ENCODE measurements at regions of chr12 and their contacts with region 1.

Region 1: DNA sequence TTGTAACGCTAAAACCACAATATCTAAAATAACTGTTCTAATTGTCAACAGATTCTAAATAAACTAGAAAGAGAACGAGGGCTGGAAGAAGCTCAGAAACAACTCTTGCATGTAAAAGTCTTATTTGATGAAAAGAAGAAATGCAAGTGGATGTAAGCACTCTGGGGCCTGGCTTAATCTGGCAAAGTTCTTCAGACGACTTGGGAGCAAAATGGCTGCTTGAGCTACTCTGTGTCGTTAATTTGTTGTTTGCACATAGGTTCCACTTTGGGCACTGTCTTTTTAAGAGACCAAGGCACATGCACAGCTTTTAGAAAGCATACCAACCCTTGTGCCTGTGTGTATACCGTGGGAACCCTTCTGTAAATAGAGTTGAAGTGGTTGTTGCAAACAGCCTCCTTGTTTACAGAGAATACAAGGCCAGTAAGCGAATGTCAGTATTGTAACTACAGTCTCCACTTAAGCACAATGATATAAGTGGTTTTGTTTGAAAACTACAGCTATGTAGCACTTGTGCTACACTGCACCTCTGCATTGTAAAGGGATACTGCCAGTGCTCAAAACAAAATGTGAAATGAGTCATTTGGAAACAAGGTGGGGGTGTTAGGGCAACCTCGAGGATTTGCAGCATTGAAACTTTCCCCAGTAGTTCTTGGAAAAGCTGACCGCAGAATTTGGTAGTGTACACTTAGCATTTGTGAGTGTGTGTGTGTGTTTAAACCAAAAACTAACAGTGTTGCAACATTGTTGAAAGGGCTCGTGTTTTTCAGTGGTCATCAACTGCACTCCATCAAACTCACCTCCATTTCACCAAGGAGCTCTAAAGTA is 154.3 kb downstream of the CEP83 start:
- DNase-seq: peak; percentile 70
- H3K4me3 Mint-ChIP-seq: no peak overlapping the region
- H3K27ac Mint-ChIP-seq: peak overlapping the region; percentile 61
- H3K4me1 Mint-ChIP-seq: peaks cover 39% of the 10 kb centered on the region
- H3K27me3 Mint-ChIP-seq: no peaks in the 10 kb centered on the region

Region 2: DNA sequence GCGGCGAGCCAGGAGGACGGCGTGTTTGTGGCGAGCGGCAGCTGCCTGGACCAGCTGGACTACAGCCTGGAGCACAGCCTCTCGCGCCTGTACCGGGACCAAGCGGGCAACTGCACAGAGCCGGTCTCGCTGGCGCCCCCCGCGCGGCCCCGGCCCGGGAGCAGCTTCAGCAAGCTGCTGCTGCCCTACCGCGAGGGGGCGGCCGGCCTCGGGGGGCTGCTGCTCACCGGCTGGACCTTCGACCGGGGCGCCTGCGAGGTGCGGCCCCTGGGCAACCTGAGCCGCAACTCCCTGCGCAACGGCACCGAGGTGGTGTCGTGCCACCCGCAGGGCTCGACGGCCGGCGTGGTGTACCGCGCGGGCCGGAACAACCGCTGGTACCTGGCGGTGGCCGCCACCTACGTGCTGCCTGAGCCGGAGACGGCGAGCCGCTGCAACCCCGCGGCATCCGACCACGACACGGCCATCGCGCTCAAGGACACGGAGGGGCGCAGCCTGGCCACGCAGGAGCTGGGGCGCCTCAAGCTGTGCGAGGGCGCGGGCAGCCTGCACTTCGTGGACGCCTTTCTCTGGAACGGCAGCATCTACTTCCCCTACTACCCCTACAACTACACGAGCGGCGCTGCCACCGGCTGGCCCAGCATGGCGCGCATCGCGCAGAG is 156.1 kb before region 1 on chr12:
- CTCF ChIA-PET with region 1: interaction called, 3 read pairs
- POLR2A ChIA-PET with region 1: no interaction called
- intact Hi-C with region 1: loop called (anchors 2 kb)
- DNase-seq: peak; percentile 54
- H3K4me3 Mint-ChIP-seq: peak overlapping the region; percentile 82
- H3K27ac Mint-ChIP-seq: no peak overlapping the region
- H3K4me1 Mint-ChIP-seq: peaks cover 19% of the 10 kb centered on the region
- H3K27me3 Mint-ChIP-seq: peaks cover 11% of the 10 kb centered on the region

Region 3: GRCh38 chr12:94262228-94263010 is 42.9 kb before region 1 on chr12:
- CTCF ChIA-PET with region 1: interaction called, 3 read pairs
- POLR2A ChIA-PET with region 1: no interaction called
- intact Hi-C with region 1: loop called (anchors 2 kb)
- DNase-seq: peak; percentile 85
- H3K4me3 Mint-ChIP-seq: peak overlapping the region; percentile 88
- H3K27ac Mint-ChIP-seq: peak overlapping the region; percentile 98
- H3K4me1 Mint-ChIP-seq: peaks cover 37% of the 10 kb centered on the region
- H3K27me3 Mint-ChIP-seq: no peaks in the 10 kb centered on the region

Region 4: GRCh38 chr12:94282675-94283074 is 22.7 kb before region 1 on chr12:
- CTCF ChIA-PET with region 1: no interaction called
- POLR2A ChIA-PET with region 1: no interaction called
- intact Hi-C with region 1: loop called (anchors 2 kb)
- DNase-seq: peak; percentile 68
- H3K4me3 Mint-ChIP-seq: peak overlapping the region; percentile 25
- H3K27ac Mint-ChIP-seq: peak overlapping the region; percentile 59
- H3K4me1 Mint-ChIP-seq: peaks cover 26% of the 10 kb centered on the region
- H3K27me3 Mint-ChIP-seq: no peaks in the 10 kb centered on the region

Region 5: DNA sequence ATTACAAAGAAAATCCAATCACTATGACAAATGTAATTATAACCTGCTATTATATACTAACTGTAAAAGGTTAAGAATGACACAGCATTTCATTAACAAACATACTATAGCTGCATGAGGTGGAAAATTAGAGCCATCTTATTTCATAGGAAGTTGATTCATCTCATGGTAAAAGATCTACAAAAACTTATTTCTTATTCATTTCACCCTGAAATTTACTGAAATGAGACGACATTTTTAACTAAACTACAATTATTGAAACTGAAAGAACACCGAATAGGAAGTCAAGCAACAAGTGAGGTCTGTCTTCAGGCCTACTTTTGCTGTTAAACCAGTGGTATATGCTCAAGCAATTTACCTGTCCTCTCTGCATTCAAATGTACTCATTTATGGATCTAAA is 67.1 kb after region 1 on chr12:
- CTCF ChIA-PET with region 1: no interaction called
- POLR2A ChIA-PET with region 1: no interaction called
- intact Hi-C with region 1: loop called (anchors 1 kb)
- DNase-seq: no peak
- H3K4me3 Mint-ChIP-seq: no peak overlapping the region
- H3K27ac Mint-ChIP-seq: peak overlapping the region; percentile 80
- H3K4me1 Mint-ChIP-seq: peaks cover 40% of the 10 kb centered on the region
- H3K27me3 Mint-ChIP-seq: no peaks in the 10 kb centered on the region

Region 6: GRCh38 chr12:94459728-94460615 is 154.6 kb after region 1 on chr12 and contains the start of gene CEP83:
- CTCF ChIA-PET with region 1: interaction called, 3 read pairs
- POLR2A ChIA-PET with region 1: interaction called, 3 read pairs
- intact Hi-C with region 1: loop called (anchors 2 kb)
- DNase-seq: peak; percentile 98
- H3K4me3 Mint-ChIP-seq: peak within 1 kb of the TSS; percentile 82
- H3K27ac Mint-ChIP-seq: peak within 1 kb of the TSS; percentile 92
- H3K4me1 Mint-ChIP-seq: peaks cover 31% of the 10 kb centered on the region
- H3K27me3 Mint-ChIP-seq: peaks cover 7% of the 10 kb centered on the region
- total RNA-seq, gene CEP83: 23.4 TPM

Measured in activated CD4-positive, alpha-beta memory T cell treated with anti-CD3 and anti-CD28 coated beads for 36 hours (primary cell).